Activated T-helper 2 cell treated with anti-CD3 and anti-CD28 coated beads, Interferon-gamma antibody, Interleukin-2, Interleukin-4, amounts not matched to agents 10 μg/mL and 5 μg/mL and 100 μg/mL, durations not matched to agents 14 hours and 24 hours and 36 hours (primary cell): ENCODE measurements at regions of chr10 and their contacts with region 1.

Region 1: DNA sequence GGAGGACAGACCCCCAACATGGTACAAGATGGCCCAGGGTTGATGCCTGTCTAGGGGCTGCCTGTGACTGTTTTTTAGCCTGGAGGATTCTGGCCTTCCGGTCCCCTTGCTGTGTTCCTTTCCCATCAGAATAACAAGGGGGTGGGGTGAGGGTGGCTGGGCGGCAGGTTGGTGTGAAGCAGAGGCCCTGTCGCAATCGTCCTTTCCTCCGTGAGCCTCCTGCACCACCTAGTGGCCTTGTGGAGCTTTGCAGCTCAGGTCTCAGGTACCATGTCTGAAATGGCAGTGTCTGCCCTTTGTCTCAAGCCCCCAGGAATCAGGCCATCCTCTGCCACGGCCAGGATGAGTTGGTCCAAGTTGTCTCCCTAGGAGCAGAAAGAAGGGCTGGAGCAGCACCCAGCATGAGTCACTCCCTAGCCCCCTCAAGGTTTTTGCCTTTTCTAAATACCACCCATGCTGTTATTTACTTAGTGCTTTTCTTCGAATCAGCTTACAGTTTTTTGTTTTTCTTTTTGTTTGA is 24.2 kb downstream of the TACR2 start:
- DNase-seq: peak; percentile 74
- H3K4me3 Mint-ChIP-seq: no peak overlapping the region
- H3K27ac Mint-ChIP-seq: no peak overlapping the region
- H3K4me1 Mint-ChIP-seq: peaks cover 13% of the 10 kb centered on the region
- H3K27me3 Mint-ChIP-seq: no peaks in the 10 kb centered on the region

Region 2: DNA sequence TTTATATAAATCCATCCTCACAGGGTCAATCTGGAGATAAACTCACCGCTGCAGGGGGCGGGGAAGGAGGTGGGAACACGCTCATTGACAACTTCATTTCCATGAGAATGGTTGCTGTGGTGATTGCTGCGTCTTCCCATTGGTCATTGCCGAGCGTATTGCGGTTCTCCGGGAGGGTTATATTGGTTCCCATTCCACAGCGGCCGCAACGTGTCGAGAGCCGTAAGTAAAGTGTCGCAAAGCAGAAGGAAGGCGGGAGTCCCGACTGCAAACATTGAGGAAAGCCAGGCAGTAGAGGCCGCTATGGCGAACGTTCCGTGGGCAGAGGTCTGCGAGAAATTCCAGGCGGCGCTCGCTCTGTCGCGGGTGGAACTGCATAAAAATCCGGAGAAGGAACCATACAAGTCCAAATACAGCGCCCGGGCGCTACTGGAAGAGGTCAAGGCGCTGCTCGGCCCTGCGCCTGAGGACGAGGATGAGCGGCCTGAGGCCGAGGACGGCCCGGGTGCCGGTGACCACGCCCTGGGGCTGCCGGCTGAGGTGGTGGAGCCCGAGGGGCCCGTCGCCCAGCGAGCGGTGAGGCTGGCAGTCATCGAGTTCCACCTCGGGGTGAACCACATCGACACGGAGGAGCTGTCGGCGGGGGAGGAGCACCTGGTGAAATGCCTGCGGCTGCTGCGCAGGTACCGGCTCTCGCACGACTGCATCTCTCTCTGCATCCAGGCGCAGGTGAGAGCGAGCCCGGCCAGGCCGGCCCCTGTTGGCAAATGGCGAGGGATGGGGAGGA is 403.8 kb before region 1 on chr10 and contains the start of gene KIFBP:
- intact Hi-C with region 1: loop called (anchors 5 kb)
- DNase-seq: peak; percentile 83
- H3K4me3 Mint-ChIP-seq: peak within 1 kb of the TSS; percentile 96
- H3K27ac Mint-ChIP-seq: peak within 1 kb of the TSS; percentile 90
- H3K4me1 Mint-ChIP-seq: peaks cover 36% of the 10 kb centered on the region
- H3K27me3 Mint-ChIP-seq: no peaks in the 10 kb centered on the region
- total RNA-seq, gene KIFBP: 16.7 and 17.1 TPM in 2 replicates

Region 3: DNA sequence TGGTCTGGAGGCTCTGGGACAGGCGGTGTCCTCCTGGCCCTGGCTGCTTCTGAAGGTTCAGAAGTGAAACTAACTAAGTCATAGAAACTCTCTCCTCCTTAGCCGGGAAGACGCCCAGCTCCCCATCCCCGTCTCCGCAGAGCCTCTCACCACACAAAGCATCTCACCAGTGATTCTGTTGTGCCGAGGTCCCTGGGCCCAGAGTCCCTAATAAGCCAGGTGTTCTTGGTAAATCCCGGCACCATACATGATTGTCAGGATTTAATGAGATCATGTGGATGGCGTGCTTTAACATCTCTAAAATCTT is 163.0 kb before region 1 on chr10:
- intact Hi-C with region 1: loop called (anchors 2 kb)
- DNase-seq: no peak
- H3K4me3 Mint-ChIP-seq: peak overlapping the region; percentile 78
- H3K27ac Mint-ChIP-seq: peak overlapping the region; percentile 94
- H3K4me1 Mint-ChIP-seq: peaks cover 60% of the 10 kb centered on the region
- H3K27me3 Mint-ChIP-seq: no peaks in the 10 kb centered on the region

Region 4: GRCh38 chr10:69237528-69238159 is 154.9 kb before region 1 on chr10:
- intact Hi-C with region 1: loop called (anchors 1 kb)
- DNase-seq: peak; percentile 77
- H3K4me3 Mint-ChIP-seq: no peak overlapping the region
- H3K27ac Mint-ChIP-seq: no peak overlapping the region
- H3K4me1 Mint-ChIP-seq: peaks cover 9% of the 10 kb centered on the region
- H3K27me3 Mint-ChIP-seq: no peaks in the 10 kb centered on the region

Region 5: DNA sequence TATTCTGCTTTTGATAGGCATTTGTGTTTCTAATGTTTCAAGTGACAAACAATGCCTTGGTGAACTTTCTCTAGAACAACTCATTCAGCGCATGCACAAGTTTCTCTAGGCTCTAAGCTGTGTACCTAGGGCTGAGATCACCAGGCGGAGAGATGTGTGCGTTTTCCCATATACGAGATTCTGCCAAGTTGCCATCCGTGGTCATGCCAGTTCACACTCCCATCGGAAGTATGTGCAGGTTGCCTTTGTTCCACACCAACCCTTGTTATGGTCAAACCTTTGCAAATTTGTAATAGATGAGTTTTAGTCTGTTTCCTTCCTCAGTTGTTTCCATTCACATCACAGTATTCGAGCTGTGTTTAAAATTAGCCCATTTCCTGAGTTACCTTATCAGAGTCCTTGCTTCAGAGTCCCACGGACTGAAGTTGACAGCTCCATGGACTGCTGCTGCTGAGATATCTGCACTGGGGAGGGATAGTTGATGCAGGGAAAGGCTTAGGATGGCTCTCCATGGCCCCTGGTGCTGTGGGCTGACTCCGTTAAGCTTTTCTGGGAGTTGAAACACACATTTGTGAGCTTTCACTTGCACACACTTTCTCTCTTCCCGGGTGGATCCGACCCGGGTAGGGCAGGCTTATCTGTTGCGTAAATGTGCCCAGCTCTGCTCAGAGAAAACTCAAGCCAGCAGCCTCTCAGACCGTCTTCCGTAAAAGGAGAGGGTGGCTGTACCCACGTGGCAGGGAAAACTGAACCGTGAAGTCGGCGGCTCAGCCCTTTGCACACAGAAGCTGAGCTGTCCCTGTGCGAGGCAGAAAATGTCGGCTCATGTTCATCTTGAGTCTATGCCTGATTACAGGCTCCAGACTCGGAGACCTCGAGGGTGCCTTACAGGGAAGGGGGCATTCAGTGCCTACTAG is 64.8 kb before region 1 on chr10:
- intact Hi-C with region 1: loop called (anchors 2 kb)
- DNase-seq: peak; percentile 22
- H3K4me3 Mint-ChIP-seq: peak overlapping the region; percentile 59
- H3K27ac Mint-ChIP-seq: peak overlapping the region; percentile 60
- H3K4me1 Mint-ChIP-seq: peaks cover 34% of the 10 kb centered on the region
- H3K27me3 Mint-ChIP-seq: no peaks in the 10 kb centered on the region

Region 6: GRCh38 chr10:69567920-69568319 is 175.4 kb after region 1 on chr10:
- intact Hi-C with region 1: no loop called
- DNase-seq: no peak
- H3K4me3 Mint-ChIP-seq: no peak overlapping the region
- H3K27ac Mint-ChIP-seq: no peak overlapping the region
- H3K4me1 Mint-ChIP-seq: peaks cover 3% of the 10 kb centered on the region
- H3K27me3 Mint-ChIP-seq: peaks cover 66% of the 10 kb centered on the region